Sciatic nerve (tissue), 2 donors: ENCODE measurements at regions of chr13 and their contacts with region 1.

Region 1: GRCh38 chr13:76711550-76712182 is 174.5 kb downstream of the KCTD12 start:
- DNase-seq: no peak
- ATAC-seq: peak; percentile 93

Region 2: DNA sequence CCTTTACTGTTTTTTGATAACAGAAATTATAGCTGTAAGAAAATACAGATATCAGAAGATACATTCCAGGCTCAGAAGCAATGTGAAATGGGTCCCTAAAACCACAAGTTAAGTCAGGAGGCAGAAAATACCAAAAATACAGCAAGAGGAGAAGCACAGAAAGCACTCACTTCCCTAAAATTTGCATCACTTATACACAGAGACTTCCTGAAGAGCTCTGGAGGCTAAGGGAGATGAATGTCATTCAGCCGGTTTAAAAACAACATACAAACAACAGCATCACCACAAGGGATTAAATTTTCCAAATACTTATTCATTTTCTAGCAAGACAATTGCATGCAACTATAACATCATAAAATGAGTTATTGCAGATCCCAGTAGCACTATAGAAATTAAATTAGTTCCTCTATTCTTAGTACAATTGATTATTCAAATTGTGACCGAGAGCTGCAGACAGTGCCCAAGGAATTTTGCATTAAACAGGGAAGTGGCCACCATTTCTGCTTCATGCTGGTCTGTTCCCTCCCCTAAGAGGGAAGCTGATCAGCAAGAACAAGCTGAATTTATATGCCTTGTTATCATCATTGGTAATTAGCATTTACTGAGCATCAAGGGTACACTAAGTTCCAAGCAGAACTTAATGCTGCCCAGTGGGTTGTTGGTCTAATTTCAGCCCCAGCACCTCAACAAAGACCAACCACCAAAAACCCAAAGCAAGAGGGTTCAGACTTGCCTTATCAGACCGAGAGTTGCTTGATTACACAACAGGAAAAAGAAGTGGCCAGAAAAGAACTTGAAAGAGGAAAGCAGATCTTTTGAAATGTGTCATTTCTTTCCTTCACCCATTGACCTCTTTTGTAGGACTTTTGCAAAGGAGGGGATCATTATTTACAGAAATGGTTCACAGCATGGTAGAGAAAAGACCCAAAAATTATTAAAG is 33.9 kb after region 1 on chr13:
- intact Hi-C with region 1: no loop called
- DNase-seq: no peak
- ATAC-seq: peak; percentile 64

Region 3: GRCh38 chr13:76759877-76760276 is 48.2 kb after region 1 on chr13:
- intact Hi-C with region 1: loop called (anchors 2 kb)
- DNase-seq: no peak
- ATAC-seq: no peak